ENCODE measurements at regions of chr10 and their contacts with region 1.

Region 1: GRCh38 chr10:110414563-110415309 is 83.0 kb upstream of the DUSP5 start:
- DNase-seq: peak; percentile 42 to 84 (median 69)
- ATAC-seq: peak; percentile 96
- H3K4me3 ChIP-seq: no peak overlapping the region
- H3K4me3 Mint-ChIP-seq: peak overlapping the region in 9 of 10 donors; percentile 13 to 71 (median 40)
- H3K27ac ChIP-seq: no peak overlapping the region
- H3K27ac Mint-ChIP-seq: peak overlapping the region; percentile 20 to 88 (median 74)
- H3K4me1 ChIP-seq: peaks cover 14 to 35% of the 10 kb centered on the region in 2 donors
- H3K4me1 Mint-ChIP-seq: peaks cover 19 to 64% (median 26%) of the 10 kb centered on the region in 7 donors
- H3K27me3 ChIP-seq: no peaks in the 10 kb centered on the region
- H3K27me3 Mint-ChIP-seq: peaks cover 0 to 5% (median 0%) of the 10 kb centered on the region in 5 donors

Region 2: GRCh38 chr10:110395725-110396651 is 18.7 kb before region 1 on chr10:
- CTCF ChIA-PET with region 1: no interaction called
- POLR2A ChIA-PET with region 1: no interaction called
- intact Hi-C with region 1: loop called in 1 of 2 experiments (anchors 1 kb)
- DNase-seq: peak in 1 of 9 donors; percentile 55
- ATAC-seq: peak; percentile 50
- H3K4me3 ChIP-seq: no peak overlapping the region
- H3K4me3 Mint-ChIP-seq: peak overlapping the region in 1 of 10 donors; percentile 9
- H3K27ac ChIP-seq: no peak overlapping the region
- H3K27ac Mint-ChIP-seq: peak overlapping the region in 2 of 9 donors; percentile 5 to 66
- H3K4me1 ChIP-seq: no peaks in the 10 kb centered on the region
- H3K4me1 Mint-ChIP-seq: peaks cover 0 to 47% (median 0%) of the 10 kb centered on the region in 7 donors
- H3K27me3 ChIP-seq: no peaks in the 10 kb centered on the region
- H3K27me3 Mint-ChIP-seq: peaks cover 0 to 8% (median 0%) of the 10 kb centered on the region in 5 donors

Region 3: DNA sequence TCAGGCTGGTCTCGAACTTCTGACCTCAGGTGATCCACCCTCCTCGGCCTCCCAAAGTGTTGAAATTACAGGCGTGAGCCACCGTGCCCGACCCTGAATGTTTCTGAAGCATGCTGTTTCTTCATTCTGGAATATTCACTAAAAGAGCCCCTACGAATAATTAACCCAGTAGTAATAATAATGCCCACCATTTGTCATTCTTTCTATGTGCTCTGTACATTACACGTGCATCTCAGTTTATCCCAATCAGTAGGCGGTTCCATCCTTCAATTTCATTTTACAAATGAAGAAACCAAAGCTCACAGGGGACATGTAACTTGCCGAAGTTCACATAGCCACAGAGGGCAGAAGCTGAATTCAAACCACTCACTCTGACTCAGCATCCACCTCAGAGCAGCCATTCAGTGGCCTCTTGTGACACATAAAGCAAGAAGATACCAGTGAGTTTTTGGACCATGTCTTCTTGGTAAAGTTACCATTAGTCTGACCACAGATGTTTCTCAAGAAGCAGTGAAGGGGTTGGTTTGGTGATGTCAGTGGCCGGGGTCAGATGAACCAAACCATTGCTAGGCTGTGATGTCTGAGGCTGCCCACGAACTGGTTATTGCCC is 11.1 kb after region 1 on chr10:
- CTCF ChIA-PET with region 1: no interaction called
- POLR2A ChIA-PET with region 1: interaction called, 4 read pairs
- intact Hi-C with region 1: loop called in 1 of 2 experiments (anchors 1 kb)
- DNase-seq: peak in 1 of 9 donors; percentile 64
- ATAC-seq: peak; percentile 78
- H3K4me3 ChIP-seq: no peak overlapping the region
- H3K4me3 Mint-ChIP-seq: peak overlapping the region in 1 of 10 donors; percentile 26
- H3K27ac ChIP-seq: no peak overlapping the region
- H3K27ac Mint-ChIP-seq: peak overlapping the region in 1 of 9 donors; percentile 75
- H3K4me1 ChIP-seq: peaks cover 0 to 8% of the 10 kb centered on the region in 2 donors
- H3K4me1 Mint-ChIP-seq: peaks cover 0 to 43% (median 9%) of the 10 kb centered on the region in 7 donors
- H3K27me3 ChIP-seq: no peaks in the 10 kb centered on the region
- H3K27me3 Mint-ChIP-seq: no peaks in the 10 kb centered on the region

Region 4: DNA sequence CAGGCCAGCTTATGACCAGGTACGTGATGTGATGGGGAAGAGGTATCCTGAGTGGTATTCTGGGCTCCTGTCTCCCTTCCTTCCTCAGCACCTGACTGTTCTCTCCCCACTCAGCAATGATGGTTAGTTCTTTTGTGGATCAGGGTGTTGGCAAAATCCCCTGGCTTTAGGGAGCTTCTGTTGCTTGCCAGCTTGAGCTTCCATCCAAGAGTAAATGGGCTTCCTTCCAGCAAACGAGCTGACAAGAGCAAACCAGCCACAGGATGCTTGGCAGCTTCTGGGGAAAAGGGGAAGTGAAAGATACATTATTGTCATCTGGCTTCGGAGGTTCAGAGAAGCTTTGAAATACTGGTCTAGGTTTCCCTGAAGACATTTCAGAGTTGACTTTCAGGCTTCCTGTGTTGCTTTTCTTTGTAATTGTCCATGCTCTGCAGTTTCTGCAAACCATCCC is 88.1 kb after region 1 on chr10:
- CTCF ChIA-PET with region 1: no interaction called
- POLR2A ChIA-PET with region 1: no interaction called
- intact Hi-C with region 1: loop called (anchors 1 kb)
- DNase-seq: peak in 1 of 9 donors; percentile 18
- ATAC-seq: peak; percentile 10
- H3K4me3 ChIP-seq: peak overlapping the region; percentile 17
- H3K4me3 Mint-ChIP-seq: peak overlapping the region; percentile 15 to 97 (median 70)
- H3K27ac ChIP-seq: peak overlapping the region; percentile 53
- H3K27ac Mint-ChIP-seq: peak overlapping the region; percentile 53 to 94 (median 81)
- H3K4me1 ChIP-seq: peaks cover 42 to 70% of the 10 kb centered on the region in 2 donors
- H3K4me1 Mint-ChIP-seq: peaks cover 55 to 88% (median 60%) of the 10 kb centered on the region in 7 donors
- H3K27me3 ChIP-seq: no peaks in the 10 kb centered on the region
- H3K27me3 Mint-ChIP-seq: peaks cover 0 to 3% (median 0%) of the 10 kb centered on the region in 5 donors

Region 5: DNA sequence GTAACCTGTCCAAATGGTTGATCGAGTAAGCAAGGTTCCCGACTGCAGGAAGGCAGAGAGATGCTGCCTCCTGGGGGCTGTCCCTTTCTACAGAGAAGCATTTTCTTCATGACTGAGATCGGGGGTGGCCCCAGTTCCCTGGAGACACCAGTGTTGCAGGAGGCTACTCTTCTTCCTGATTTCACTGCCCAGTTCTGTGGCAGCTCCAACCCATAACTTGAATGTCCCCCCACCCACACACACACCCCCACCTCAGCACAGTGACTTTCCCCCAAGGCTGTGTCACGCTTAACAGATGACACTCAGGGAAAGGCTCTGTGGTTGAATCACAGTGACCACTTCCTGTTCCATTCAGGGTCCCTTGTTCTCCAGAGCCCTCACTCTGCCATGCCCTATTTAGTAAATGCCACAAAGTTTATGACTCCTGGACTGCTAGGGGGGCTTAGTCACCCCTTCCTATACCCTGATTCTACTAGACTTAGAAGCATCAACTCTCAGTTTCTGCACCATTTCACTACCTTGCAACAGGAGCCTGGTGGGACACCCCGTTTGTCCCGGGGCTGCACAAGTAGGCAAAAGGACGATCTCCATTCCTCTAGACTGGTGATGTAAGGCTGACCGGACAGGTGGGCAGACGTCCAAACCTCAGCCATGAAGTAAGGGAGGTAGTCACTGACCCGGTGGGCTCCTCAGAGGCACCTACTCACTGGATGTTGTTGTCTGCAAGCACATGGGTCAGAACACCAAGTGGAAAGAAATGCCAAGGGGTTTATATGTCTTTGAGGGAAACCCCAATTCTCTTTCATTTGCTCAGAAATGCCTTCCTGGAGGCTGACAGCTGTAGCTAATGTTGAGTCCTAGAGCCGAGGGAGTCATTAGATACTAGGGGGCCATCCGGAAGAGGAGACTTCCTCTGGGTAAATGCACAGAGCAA is 121.5 kb after region 1 on chr10:
- CTCF ChIA-PET with region 1: no interaction called
- POLR2A ChIA-PET with region 1: no interaction called
- intact Hi-C with region 1: loop called in 1 of 2 experiments (anchors 2 kb)
- DNase-seq: peak in 6 of 9 donors; percentile 10 to 70 (median 21)
- ATAC-seq: peak; percentile 94
- H3K4me3 ChIP-seq: no peak overlapping the region
- H3K4me3 Mint-ChIP-seq: peak overlapping the region in 2 of 10 donors; percentile 71 to 73
- H3K27ac ChIP-seq: no peak overlapping the region
- H3K27ac Mint-ChIP-seq: peak overlapping the region in 2 of 9 donors; percentile 48 to 74
- H3K4me1 ChIP-seq: peaks cover 7 to 9% of the 10 kb centered on the region in 2 donors
- H3K4me1 Mint-ChIP-seq: peaks cover 15 to 50% (median 17%) of the 10 kb centered on the region in 7 donors
- H3K27me3 ChIP-seq: no peaks in the 10 kb centered on the region
- H3K27me3 Mint-ChIP-seq: peaks cover 0 to 8% (median 0%) of the 10 kb centered on the region in 5 donors

Region 6: GRCh38 chr10:110547139-110547761 is 132.5 kb after region 1 on chr10:
- CTCF ChIA-PET with region 1: no interaction called
- POLR2A ChIA-PET with region 1: no interaction called
- intact Hi-C with region 1: loop called in 1 of 2 experiments (anchors 5 kb)
- DNase-seq: peak in 7 of 9 donors; percentile 40 to 75 (median 68)
- ATAC-seq: peak; percentile 85
- H3K4me3 ChIP-seq: no peak overlapping the region
- H3K4me3 Mint-ChIP-seq: peak overlapping the region in 1 of 10 donors; percentile 2
- H3K27ac ChIP-seq: no peak overlapping the region
- H3K27ac Mint-ChIP-seq: peak overlapping the region in 2 of 9 donors; percentile 3 to 6
- H3K4me1 ChIP-seq: peaks cover 0 to 5% of the 10 kb centered on the region in 2 donors
- H3K4me1 Mint-ChIP-seq: peaks cover 3 to 16% (median 5%) of the 10 kb centered on the region in 7 donors
- H3K27me3 ChIP-seq: no peaks in the 10 kb centered on the region
- H3K27me3 Mint-ChIP-seq: peaks cover 0 to 39% (median 11%) of the 10 kb centered on the region in 5 donors

Measured in naive thymus-derived CD4-positive, alpha-beta T cell (primary cell).